ENCODE measurements at regions of chr3 and their contacts with region 1.

Region 1: GRCh38 chr3:176814285-176814684 is 383.0 kb downstream of the TBL1XR1 start:
- DNase-seq: no peak
- H3K4me3 ChIP-seq: no peak overlapping the region
- H3K27me3 ChIP-seq: no peaks in the 10 kb centered on the region
- CTCF ChIP-seq: peak; percentile 74

Region 2: DNA sequence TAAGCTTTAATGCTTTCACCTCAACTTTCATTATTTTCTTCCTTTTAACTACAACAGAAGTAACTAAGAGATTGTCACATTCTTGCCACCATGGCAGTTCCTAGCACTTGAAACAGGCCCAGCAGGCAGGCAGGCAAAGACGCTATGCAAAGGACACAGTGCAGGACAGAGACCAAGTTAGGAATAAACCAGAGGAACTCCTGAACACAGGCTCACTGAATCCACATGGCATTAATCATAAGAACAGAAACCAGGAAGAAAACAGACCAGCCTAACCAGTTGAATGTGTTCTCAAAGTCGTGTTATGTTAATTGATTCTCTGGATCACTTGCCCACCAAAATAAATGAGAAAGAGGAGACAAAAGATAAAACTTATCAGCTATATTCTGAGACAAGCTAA is 14.6 kb before region 1 on chr3:
- CTCF ChIA-PET with region 1: interaction called, 12 read pairs
- POLR2A ChIA-PET with region 1: no interaction called
- DNase-seq: no peak
- H3K4me3 ChIP-seq: no peak overlapping the region
- H3K27me3 ChIP-seq: no peaks in the 10 kb centered on the region
- CTCF ChIP-seq: no peak

Region 3: DNA sequence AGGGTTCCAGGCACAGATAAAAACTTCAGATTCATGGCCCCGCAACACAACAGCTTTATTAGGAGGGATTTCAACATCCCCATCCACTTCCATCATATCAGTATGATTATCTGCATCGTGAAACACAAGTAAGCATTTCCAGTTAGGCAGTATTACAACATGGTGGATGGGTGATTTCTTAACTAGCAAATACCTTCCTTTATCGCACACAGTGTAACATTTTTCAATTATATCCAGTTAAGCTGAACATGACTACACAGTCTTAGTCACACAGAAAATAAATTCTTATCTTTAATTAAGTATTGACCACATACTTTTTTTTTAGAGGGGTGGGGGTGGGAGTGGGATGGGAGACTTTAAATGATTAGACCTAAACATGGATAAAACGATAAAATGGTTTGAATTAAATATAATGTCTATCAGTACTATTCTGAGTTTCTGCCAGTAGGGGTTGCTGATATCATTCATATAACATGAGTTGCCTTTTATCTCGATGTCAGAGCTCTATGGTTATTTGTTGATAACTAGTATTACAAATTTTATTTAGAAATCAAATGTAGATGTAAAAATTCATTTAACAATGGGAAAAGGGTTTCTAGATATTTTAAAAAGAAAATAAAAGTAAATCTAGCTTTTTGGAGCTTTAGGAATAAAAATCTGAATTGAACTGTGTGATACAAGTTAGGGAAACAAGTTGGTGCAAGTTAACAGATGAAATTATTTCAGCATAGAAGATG is 236.4 kb after region 1 on chr3:
- CTCF ChIA-PET with region 1: no interaction called
- POLR2A ChIA-PET with region 1: no interaction called
- DNase-seq: no peak
- H3K4me3 ChIP-seq: no peak overlapping the region
- H3K27me3 ChIP-seq: no peaks in the 10 kb centered on the region
- CTCF ChIP-seq: peak; percentile 42